Heart left ventricle (tissue), 16 donors: ENCODE measurements at regions of chr1 and their contacts with region 1.

Region 1: GRCh38 chr1:35180776-35181374 is 12.1 kb downstream of the SFPQ start:
- DNase-seq: no peak
- ATAC-seq: peak in 1 of 4 donors; percentile 13
- H3K4me3 ChIP-seq: no peak overlapping the region
- H3K27ac ChIP-seq: no peak overlapping the region
- H3K4me1 ChIP-seq: peaks cover 0 to 71% (median 42%) of the 10 kb centered on the region in 12 donors
- H3K27me3 ChIP-seq: no peaks in the 10 kb centered on the region
- CTCF ChIP-seq: no peak
- POLR2A ChIP-seq: no peak

Region 2: DNA sequence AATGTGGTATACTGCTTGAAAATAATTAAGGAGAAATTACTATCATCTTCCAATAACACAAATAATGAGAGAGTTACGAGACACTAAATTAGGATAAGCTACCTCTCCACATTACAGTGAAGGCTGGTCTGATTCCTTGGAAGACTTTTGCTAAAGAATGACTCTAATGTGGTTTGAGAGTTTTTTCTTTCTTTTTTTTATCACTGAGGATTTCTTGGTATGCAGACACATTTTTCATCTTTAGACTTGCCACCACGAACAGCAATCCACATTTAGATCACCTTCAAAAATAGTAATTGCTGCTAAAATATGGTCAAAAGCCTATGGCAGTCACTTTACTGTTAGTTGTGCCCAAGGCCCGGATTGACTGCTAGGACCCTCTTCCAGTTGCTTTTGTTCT is 179.1 kb before region 1 on chr1:
- intact Hi-C with region 1: loop called in 1 of 10 experiments (anchors 10 kb)
- DNase-seq: no peak
- ATAC-seq: no peak
- H3K4me3 ChIP-seq: no peak overlapping the region
- H3K27ac ChIP-seq: no peak overlapping the region
- H3K4me1 ChIP-seq: no peaks in the 10 kb centered on the region
- H3K27me3 ChIP-seq: no peaks in the 10 kb centered on the region
- CTCF ChIP-seq: no peak
- POLR2A ChIP-seq: no peak